PC-9 (cell line): ENCODE measurements at regions of chr7 and their contacts with region 1.

Region 1: GRCh38 chr7:134811765-134812164 is 32.3 kb downstream of the CALD1 start:
- DNase-seq: no peak
- H3K4me3 ChIP-seq: no peak overlapping the region
- H3K27ac ChIP-seq: no peak overlapping the region
- H3K4me1 ChIP-seq: no peaks in the 10 kb centered on the region
- H3K27me3 ChIP-seq: no peaks in the 10 kb centered on the region
- CTCF ChIP-seq: no peak

Region 2: DNA sequence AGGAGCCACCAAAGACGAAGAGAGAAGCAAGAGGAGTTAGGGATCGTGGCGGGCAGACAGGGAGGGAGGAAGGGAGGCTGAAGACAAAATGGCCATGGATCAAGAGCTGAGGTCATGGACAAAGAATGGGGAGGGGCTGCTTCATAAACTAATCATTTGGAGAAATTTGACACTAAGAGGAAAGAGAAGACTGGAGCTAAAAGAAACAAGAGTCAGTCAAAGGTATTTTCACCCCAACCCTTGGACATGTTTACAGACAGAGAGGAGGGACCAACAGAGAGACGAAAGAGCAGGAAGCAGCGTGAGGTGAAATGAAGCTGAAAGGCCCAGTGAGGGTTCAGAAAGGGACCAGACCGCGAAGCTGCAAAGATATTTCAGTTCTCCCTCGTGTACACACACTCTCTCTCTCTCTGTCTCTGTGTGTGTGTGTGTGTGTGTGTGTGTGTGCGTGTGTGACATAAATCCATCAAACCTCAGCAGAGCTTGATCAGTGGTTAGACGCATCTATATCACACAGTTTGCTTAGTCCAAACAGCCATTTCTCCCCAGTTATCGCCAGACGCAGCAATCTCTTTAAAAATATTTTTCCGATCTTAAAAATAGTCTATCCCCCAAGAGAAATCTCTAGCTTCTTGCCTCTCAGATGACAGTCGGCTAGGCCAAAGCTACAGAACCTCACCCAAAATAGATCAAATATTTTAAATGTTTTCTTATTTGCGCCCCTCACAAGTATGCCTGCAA is 44.8 kb before region 1 on chr7:
- CTCF ChIA-PET with region 1: no interaction called
- POLR2A ChIA-PET with region 1: no interaction called
- intact Hi-C with region 1: no loop called
- DNase-seq: peak in 1 of 2 experiments; percentile 45
- H3K4me3 ChIP-seq: no peak overlapping the region
- H3K27ac ChIP-seq: no peak overlapping the region
- H3K4me1 ChIP-seq: peaks cover 12% of the 10 kb centered on the region; the same call in 1 of the 2 replicates
- H3K27me3 ChIP-seq: no peaks in the 10 kb centered on the region
- CTCF ChIP-seq: no peak

Region 3: DNA sequence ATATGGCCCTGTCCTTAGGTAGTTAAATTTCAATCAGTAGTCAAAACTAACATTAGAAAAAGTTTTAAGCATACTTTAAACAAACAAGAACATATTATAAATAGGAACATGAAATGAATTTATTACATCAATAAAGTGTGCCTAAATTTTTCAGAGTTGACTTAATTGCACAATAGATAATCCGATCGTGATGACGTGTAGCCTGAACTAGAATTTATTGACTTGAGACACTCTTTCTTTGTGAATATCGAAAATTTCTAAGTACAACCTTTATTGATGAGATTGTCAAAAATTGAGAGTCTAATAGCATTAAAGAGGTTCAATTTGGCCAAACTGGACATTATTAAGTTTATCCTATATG is 23.7 kb after region 1 on chr7:
- CTCF ChIA-PET with region 1: no interaction called
- POLR2A ChIA-PET with region 1: interaction called, 47 read pairs
- intact Hi-C with region 1: no loop called
- DNase-seq: no peak
- H3K4me3 ChIP-seq: no peak overlapping the region
- H3K27ac ChIP-seq: no peak overlapping the region
- H3K4me1 ChIP-seq: no peaks in the 10 kb centered on the region
- H3K27me3 ChIP-seq: no peaks in the 10 kb centered on the region
- CTCF ChIP-seq: no peak